ENCODE measurements at regions of chr1 and their contacts with region 1.

Region 1: DNA sequence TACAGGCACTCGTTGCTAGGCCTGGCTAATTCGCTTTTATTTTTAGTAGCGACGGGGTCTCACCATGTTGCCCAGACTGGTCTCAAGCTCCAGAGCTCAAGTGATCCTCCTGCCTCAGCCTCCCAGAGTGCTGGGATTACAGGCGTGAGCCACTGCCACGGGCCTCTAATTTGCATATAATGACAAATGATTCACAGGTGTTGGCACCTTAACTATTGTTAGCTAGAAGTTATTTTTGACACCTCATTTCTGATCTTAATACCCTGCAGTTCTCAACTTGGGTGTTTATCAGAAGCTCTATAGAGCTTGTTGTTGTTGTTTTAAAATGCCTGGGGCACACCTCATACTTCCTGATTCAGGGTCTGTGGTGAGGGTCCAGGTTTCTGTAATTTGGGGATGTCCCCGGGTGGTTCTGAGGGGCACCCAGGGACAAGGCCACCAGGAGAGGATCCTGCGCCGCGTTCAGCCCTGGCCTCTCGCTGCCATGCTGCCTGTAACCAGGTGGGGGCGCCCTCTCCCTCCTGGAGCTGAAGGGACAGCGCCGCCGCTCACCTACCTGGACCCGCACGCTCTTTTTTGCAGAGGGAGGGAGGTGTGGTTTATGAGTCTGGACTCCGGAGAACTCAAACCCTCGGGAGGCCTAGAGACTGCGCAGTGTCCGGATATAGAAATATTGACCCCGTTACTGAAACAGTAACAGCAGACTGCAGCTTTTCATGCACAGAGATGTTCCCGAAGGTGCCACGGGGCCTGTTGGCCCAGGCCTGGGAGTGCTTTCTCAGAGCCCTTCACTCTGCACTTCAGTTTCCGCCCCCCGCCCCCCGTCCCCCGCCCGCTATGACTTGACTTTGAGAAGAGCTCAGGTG is 23.0 kb upstream of the NEK2 start:
- DNase-seq: peak; percentile 7
- H3K4me3 ChIP-seq: peak overlapping the region; percentile 29; the same call in 1 of the 2 replicates
- H3K27ac ChIP-seq: no peak overlapping the region
- H3K27me3 ChIP-seq: peaks cover 27% of the 10 kb centered on the region
- CTCF ChIP-seq: peak; percentile 95

Region 2: GRCh38 chr1:211711315-211711705 is 12.9 kb after region 1 on chr1:
- CTCF ChIA-PET with region 1: interaction called, 67 read pairs
- POLR2A ChIA-PET with region 1: interaction called, 4 read pairs
- DNase-seq: no peak
- H3K4me3 ChIP-seq: no peak overlapping the region
- H3K27ac ChIP-seq: no peak overlapping the region
- H3K27me3 ChIP-seq: peaks cover 2% of the 10 kb centered on the region
- CTCF ChIP-seq: no peak

Region 3: GRCh38 chr1:211788626-211789025 is 90.2 kb after region 1 on chr1:
- CTCF ChIA-PET with region 1: interaction called, 10 read pairs
- POLR2A ChIA-PET with region 1: no interaction called
- DNase-seq: no peak
- H3K4me3 ChIP-seq: no peak overlapping the region
- H3K27ac ChIP-seq: no peak overlapping the region
- H3K27me3 ChIP-seq: no peaks in the 10 kb centered on the region
- CTCF ChIP-seq: no peak

Region 4: DNA sequence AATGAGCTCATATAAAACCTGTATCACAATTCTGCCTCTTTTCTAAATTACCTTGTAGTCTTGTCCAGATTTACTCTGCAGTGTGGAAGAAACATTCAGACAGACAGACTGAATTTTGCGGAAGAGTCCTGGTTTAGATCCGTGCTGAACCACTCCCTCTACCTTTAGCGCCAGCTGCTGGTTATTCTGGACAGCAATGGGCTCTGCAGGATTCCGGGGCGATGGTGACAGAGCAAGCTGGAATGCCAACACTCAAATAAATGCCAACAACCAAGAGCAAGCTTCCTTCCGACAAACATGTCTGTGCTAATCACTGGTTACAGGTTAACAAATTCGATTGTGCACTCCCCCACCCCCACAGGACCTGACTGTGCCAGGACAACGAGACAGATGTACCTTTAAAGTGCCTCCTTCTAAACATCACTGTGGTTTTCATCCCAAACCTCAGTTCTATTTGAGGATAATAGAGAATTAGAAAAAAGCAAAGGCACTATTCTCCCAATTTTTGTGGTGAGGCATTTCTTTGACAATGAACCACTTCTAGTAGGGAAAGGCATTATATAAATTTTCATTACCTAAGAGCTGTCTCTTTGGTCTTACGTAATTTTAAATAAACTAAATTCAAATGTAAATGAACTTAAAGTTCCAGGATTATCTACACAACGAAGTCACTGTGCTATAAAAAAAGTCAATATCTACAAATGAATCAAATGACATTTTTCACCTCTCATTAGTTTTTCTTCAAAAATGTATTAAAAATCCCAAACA is 246.5 kb after region 1 on chr1:
- CTCF ChIA-PET with region 1: interaction called, 14 read pairs
- POLR2A ChIA-PET with region 1: no interaction called
- DNase-seq: no peak
- H3K4me3 ChIP-seq: no peak overlapping the region
- H3K27ac ChIP-seq: no peak overlapping the region
- H3K27me3 ChIP-seq: no peaks in the 10 kb centered on the region
- CTCF ChIP-seq: peak; percentile 33

Measured in AG04450 (cell line).